PC-3 (cell line): ENCODE measurements at regions of chr5 and their contacts with region 1.

Region 1: DNA sequence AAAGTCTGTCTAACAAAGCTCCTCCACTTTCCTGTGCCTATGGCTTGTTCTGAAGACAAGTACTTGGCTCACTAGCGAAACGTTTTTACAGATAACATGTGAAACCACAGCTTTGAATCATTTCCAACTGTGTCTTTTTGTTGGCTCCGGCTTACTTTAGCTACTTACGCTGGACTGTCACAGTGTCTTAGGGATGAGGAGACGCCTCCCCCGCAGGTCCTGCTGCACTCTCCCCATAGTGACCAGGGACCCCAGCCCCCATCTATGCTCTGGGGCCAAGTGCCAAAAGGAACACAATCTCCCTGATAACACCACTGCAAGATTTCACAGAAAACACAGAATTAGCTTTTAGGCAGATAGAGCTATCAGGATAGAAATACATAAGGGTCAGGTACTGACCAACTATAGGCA is 219.1 kb downstream of the ADAMTS6 start:
- DNase-seq: no peak
- ATAC-seq: no peak
- H3K4me3 ChIP-seq: no peak overlapping the region
- H3K27ac ChIP-seq: no peak overlapping the region
- H3K4me1 ChIP-seq: no peaks in the 10 kb centered on the region
- H3K27me3 ChIP-seq: no peaks in the 10 kb centered on the region
- CTCF ChIP-seq: no peak

Region 2: DNA sequence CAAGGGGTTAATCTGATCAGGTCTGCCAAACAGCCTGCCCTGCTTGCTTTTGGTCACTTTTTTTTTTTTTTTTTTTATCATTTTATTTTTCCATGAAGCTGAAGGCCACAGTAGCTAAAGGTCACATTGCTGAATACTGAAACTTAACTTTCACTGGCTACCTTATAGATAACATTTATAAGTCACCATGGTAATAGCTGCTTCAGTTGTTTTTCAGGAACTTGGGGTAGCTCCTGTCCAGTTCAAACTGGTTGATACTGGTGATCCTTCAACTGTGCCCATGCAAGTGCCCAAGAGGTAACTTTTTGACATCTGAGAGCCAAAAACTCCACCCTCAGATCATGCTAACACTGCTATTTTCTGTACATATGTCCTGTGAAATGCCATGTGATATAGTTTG is 825.2 kb before region 1 on chr5:
- CTCF ChIA-PET with region 1: no interaction called
- POLR2A ChIA-PET with region 1: interaction called, 17 read pairs
- intact Hi-C with region 1: no loop called
- DNase-seq: no peak
- ATAC-seq: no peak
- H3K4me3 ChIP-seq: no peak overlapping the region
- H3K27ac ChIP-seq: no peak overlapping the region
- H3K4me1 ChIP-seq: no peaks in the 10 kb centered on the region
- H3K27me3 ChIP-seq: no peaks in the 10 kb centered on the region
- CTCF ChIP-seq: no peak

Region 3: DNA sequence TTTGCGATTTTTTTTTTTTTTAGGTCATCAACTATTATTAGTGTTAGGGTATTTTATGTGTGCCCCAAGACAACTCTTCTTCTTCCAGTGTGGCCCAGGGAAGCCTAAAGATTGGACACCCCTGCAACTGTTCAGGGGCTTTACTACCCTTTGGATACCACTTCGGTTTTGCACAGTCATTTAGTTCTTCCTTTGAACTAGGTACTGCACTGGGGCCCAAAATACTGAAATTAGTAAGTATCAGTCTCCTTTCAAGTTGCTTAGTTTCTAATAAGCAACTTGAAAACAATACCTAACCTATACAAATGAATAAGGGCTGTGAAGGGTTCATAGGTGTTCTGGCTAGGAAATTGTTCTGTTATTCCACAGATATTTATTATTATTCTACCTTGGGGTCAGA is 448.6 kb before region 1 on chr5:
- CTCF ChIA-PET with region 1: no interaction called
- POLR2A ChIA-PET with region 1: no interaction called
- intact Hi-C with region 1: no loop called
- DNase-seq: no peak
- ATAC-seq: no peak
- H3K4me3 ChIP-seq: no peak overlapping the region
- H3K27ac ChIP-seq: no peak overlapping the region
- H3K4me1 ChIP-seq: peaks cover 14% of the 10 kb centered on the region; the same call in 1 of the 2 replicates
- H3K27me3 ChIP-seq: no peaks in the 10 kb centered on the region
- CTCF ChIP-seq: no peak

Region 4: GRCh38 chr5:65229841-65230240 is 32.8 kb before region 1 on chr5:
- CTCF ChIA-PET with region 1: no interaction called
- POLR2A ChIA-PET with region 1: no interaction called
- intact Hi-C with region 1: no loop called
- DNase-seq: no peak
- ATAC-seq: no peak
- H3K4me3 ChIP-seq: no peak overlapping the region
- H3K27ac ChIP-seq: no peak overlapping the region
- H3K4me1 ChIP-seq: no peaks in the 10 kb centered on the region
- H3K27me3 ChIP-seq: no peaks in the 10 kb centered on the region
- CTCF ChIP-seq: no peak

Region 5: DNA sequence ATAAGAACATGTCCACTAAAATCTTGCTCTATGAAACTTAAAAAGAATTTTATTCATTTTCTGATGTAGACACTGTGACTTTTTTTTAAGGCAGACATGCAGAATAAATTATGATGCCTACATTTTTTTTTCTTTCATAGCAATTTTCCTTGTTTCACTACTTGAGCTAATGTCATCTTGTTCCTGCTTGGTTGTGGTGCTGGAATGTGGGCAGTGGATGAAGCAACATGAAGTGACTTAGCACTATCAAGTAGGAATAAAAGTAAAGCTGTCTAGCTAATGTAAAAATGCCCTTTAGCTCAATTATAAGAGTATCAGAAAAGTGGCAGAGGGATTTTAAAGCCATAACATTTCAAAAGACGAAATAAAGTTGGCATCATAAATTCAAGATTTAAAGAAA is 28.0 kb after region 1 on chr5:
- CTCF ChIA-PET with region 1: no interaction called
- POLR2A ChIA-PET with region 1: no interaction called
- intact Hi-C with region 1: no loop called
- DNase-seq: no peak
- ATAC-seq: no peak
- H3K4me3 ChIP-seq: no peak overlapping the region
- H3K27ac ChIP-seq: no peak overlapping the region
- H3K4me1 ChIP-seq: no peaks in the 10 kb centered on the region
- H3K27me3 ChIP-seq: no peaks in the 10 kb centered on the region
- CTCF ChIP-seq: no peak